ENCODE measurements at regions of chr19 and their contacts with region 1.

Region 1: DNA sequence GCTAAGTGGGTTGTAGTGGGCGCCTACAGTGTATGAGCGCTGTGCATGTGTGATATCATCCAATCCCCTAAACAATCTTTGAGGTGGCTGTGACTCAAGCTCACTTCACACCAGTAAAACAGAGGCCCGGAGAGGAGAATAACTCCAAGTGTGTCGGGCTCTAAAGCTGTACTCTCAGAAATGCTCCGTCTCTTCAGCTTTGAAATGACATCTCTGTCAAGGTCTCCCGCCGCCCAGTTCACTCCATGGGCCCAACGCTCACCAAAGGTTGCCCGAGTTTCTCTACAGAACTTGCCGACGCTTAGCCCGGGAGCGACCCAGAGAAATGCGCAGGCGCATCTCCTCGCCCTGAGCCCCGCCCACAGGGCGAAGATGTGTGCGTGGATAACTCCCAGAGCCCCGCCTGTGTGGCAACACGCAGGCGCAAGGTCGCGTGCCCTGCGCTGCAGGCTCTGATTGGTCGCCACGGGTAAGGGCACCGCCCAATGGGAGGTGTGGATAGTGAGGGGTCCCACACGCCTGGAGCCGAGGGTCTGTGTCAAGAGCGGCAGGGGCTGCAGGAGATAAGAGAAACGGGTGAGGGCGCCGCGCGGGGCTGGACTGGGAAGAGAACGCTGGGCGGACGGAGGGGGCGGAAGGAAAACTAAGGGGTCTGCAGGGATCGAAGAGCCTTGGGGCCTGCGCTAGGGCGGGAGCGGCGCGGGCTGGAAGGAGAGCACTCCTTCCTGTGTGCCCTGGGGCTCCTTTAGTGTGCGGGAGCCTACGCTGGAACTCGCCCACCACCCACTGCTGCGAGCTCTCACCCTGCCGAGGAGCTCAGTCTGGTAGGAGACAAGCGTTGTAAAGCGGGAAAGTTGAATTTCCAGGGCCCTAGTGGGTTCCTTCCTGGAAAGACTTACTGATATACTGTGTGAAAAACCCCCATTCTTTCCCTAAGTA is at the start of gene ZNF526:
- DNase-seq: peak; percentile 99
- H3K4me3 Mint-ChIP-seq: peak within 1 kb of the TSS; percentile 99
- H3K27ac Mint-ChIP-seq: peak within 1 kb of the TSS; percentile 94
- H3K4me1 Mint-ChIP-seq: peaks cover 52% of the 10 kb centered on the region
- H3K27me3 Mint-ChIP-seq: peaks cover 2% of the 10 kb centered on the region
- total RNA-seq, gene ZNF526: 18.4 and 18.5 TPM in 2 replicates

Region 2: GRCh38 chr19:41934849-41935374 is 285.2 kb before region 1 on chr19:
- intact Hi-C with region 1: no loop called
- DNase-seq: peak; percentile 61
- H3K4me3 Mint-ChIP-seq: peak overlapping the region; percentile 13
- H3K27ac Mint-ChIP-seq: peak overlapping the region; percentile 77
- H3K4me1 Mint-ChIP-seq: peaks cover 44% of the 10 kb centered on the region
- H3K27me3 Mint-ChIP-seq: peaks cover 24% of the 10 kb centered on the region

Region 3: GRCh38 chr19:42108527-42109389 is 111.3 kb before region 1 on chr19:
- intact Hi-C with region 1: loop called (anchors 1 kb)
- DNase-seq: peak; percentile 82
- H3K4me3 Mint-ChIP-seq: no peak overlapping the region
- H3K27ac Mint-ChIP-seq: peak overlapping the region; percentile 42
- H3K4me1 Mint-ChIP-seq: peaks cover 43% of the 10 kb centered on the region
- H3K27me3 Mint-ChIP-seq: no peaks in the 10 kb centered on the region

Region 4: GRCh38 chr19:42132851-42133528 is 87.1 kb before region 1 on chr19:
- intact Hi-C with region 1: loop called (anchors 1 kb)
- DNase-seq: peak; percentile 85
- H3K4me3 Mint-ChIP-seq: peak overlapping the region; percentile 93
- H3K27ac Mint-ChIP-seq: peak overlapping the region; percentile 91
- H3K4me1 Mint-ChIP-seq: peaks cover 61% of the 10 kb centered on the region
- H3K27me3 Mint-ChIP-seq: no peaks in the 10 kb centered on the region

Region 5: DNA sequence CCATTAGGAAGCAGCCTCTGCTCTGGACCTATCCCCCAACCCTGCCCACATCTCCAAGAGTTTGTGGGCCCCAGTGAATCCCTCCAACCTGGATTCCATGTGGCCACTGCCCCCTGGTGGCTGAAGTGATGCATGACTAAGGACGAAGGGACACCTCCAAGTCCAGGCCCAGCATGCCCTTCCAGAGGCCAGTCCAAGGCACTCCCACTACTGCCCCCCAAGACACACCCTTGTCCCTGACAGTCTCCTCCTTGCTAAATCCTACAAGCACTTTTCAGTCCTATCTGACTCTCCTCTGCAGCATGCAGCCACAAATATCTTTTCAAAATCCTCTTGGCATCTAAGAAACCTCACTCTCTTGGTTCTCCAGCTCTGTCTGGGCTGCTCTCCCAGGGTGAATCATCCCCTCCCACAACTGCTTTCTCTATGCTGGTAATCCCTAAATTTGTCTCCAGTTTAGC is 35.6 kb before region 1 on chr19:
- intact Hi-C with region 1: loop called (anchors 2 kb)
- DNase-seq: peak; percentile 56
- H3K4me3 Mint-ChIP-seq: peak overlapping the region; percentile 19
- H3K27ac Mint-ChIP-seq: peak overlapping the region; percentile 54
- H3K4me1 Mint-ChIP-seq: peaks cover 45% of the 10 kb centered on the region
- H3K27me3 Mint-ChIP-seq: peaks cover 15% of the 10 kb centered on the region

Region 6: DNA sequence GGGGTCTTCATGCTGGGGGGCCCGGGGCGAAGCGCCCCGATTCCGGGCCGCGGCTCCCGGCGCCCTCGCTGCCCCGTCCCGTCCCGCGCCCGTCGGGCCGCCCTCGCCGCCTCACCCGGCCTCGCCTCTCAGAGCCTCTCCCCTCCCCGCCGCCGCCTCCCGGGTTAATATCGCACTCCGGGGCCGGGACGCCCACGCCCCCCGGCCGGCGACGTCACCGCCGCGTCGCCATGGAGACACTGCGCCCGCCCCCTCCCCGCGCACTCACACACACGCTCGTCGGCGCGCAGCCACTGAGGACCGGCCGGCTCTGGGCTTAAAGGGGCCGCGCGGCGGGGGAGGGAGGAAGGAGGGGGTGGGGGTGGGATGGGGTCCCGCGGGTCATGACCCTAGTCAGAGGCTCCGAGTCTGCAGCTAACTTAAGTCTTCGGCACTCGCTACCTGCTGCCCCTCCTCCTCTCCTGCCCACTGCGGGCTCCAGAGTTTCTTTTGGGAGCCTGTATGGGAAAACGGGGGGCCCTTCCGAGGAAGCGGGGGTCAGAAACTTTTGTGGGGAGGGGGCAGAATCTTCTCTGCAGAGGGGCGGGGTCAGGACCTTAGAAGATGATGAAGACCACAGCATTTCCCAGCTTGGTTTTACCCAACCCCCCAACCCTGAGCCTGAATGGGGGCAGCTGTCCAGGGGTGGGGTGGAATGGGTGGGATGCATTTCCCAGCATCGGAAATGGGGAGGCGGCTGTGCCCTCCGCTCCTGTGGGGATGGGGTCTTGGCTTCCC is 35.1 kb after region 1 on chr19 and contains the start of gene ERF:
- intact Hi-C with region 1: loop called (anchors 1 kb)
- DNase-seq: peak; percentile 92
- H3K4me3 Mint-ChIP-seq: peak within 1 kb of the TSS; percentile 74
- H3K27ac Mint-ChIP-seq: peak within 1 kb of the TSS; percentile 65
- H3K4me1 Mint-ChIP-seq: peaks cover 19% of the 10 kb centered on the region
- H3K27me3 Mint-ChIP-seq: peaks cover 9% of the 10 kb centered on the region
- total RNA-seq, gene ERF: 71.9 and 78.4 TPM in 2 replicates

Region 7: DNA sequence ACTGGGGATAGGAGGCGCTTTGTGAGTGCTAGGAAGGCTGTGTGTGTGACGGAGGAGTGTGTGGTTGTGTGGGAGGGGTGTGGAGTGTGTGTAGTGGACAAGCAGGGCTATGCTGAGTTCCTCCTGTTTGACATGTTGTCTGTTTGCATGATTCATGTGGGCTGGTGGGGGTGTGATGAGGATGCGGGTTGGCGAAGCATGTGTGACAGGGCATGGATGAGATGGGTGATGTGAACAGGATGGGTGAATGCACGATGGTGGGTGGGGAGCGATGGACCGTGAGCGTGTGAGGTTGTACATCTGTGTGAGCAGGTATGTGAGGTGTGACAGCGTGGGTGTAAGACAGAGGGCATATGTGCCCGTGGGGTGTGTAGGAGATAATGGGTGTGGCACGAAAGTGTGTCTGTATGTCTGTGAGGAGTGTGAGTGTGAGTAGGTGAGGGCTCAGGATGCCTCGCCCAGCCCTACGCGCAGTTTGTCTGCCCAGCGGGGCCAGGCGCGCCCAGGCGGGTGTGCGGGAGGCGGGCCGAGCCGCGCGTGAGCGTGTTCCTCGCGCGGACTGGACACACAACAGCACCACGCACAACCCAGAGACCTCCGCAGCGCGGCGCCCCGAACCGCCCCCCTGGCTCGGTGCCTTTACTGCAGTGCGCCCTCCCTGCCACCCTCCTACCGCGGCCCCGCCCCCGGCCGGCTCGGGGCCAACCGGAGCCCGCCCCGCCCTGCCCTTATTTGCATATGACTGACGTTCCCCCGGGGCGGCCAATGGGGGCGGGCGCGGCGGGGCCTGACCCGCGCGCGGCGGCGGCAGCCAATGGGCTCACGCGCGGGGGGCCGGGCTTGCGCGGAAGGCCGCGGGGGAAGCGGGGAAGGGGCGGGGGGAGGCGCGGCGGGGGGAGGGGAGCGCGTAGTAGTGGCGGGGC is 63.3 kb after region 1 on chr19:
- intact Hi-C with region 1: loop called (anchors 1 kb)
- DNase-seq: peak; percentile 92
- H3K4me3 Mint-ChIP-seq: no peak overlapping the region
- H3K27ac Mint-ChIP-seq: no peak overlapping the region
- H3K4me1 Mint-ChIP-seq: peaks cover 47% of the 10 kb centered on the region
- H3K27me3 Mint-ChIP-seq: no peaks in the 10 kb centered on the region

Region 8: GRCh38 chr19:42325273-42325895 is 105.3 kb after region 1 on chr19 and contains the start of gene MEGF8:
- intact Hi-C with region 1: loop called (anchors 1 kb)
- DNase-seq: peak; percentile 98
- H3K4me3 Mint-ChIP-seq: peak within 1 kb of the TSS; percentile 90
- H3K27ac Mint-ChIP-seq: peak within 1 kb of the TSS; percentile 53
- H3K4me1 Mint-ChIP-seq: peaks cover 15% of the 10 kb centered on the region
- H3K27me3 Mint-ChIP-seq: peaks cover 32% of the 10 kb centered on the region
- total RNA-seq, gene MEGF8: 7.5 and 7.8 TPM in 2 replicates